Natural killer cell (primary cell): ENCODE measurements at regions of chr1 and their contacts with region 1.

Region 1: DNA sequence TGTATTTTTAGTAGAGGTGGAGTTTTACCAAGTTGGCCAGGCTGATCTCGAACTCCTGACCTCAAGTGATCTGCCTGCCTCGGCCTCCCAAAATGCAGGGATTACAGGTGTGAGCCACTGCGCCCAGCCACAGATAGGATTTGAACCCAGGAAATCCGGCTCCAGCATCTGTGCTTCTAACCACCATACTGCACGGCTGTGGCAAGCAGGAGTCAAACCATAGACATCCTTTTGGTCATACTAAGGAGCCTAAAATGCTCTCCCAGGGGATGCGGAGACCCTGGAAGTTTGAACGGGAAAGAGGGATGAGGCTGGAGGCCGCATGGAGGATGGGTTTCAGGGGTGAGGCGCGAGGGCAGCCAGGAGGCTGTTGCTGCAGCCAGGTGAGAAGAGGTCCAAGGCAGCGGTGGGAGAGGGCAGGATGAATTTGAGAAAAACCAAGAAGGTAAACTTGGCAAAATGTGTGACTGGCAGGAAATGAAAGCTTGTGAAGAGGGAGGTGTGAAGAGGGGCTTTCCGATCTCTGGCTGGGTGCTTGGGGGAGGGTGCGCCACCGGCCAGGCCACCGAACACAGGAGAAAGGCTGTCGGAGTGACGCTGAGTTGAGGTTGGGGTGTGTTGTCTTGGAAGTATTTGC is 24.0 kb upstream of the CDK18 start:
- DNase-seq: peak; percentile 70 to 90
- ATAC-seq: peak; percentile 71 to 80 (median 78)
- H3K4me3 ChIP-seq: no peak overlapping the region
- H3K4me3 Mint-ChIP-seq: peak overlapping the region; percentile 85
- H3K27ac ChIP-seq: peak overlapping the region; percentile 81
- H3K27ac Mint-ChIP-seq: peak overlapping the region; percentile 83 to 95
- H3K4me1 ChIP-seq: peaks cover 81% of the 10 kb centered on the region
- H3K4me1 Mint-ChIP-seq: peaks cover 54 to 63% of the 10 kb centered on the region in 2 donors
- H3K27me3 ChIP-seq: no peaks in the 10 kb centered on the region
- H3K27me3 Mint-ChIP-seq: peaks cover 0 to 17% of the 10 kb centered on the region in 2 donors
- CTCF ChIP-seq: no peak

Region 2: GRCh38 chr1:205438213-205439157 is 42.0 kb before region 1 on chr1:
- intact Hi-C with region 1: loop called (anchors 5 kb)
- DNase-seq: no peak
- ATAC-seq: no peak
- H3K4me3 ChIP-seq: no peak overlapping the region
- H3K4me3 Mint-ChIP-seq: peak overlapping the region; percentile 13
- H3K27ac ChIP-seq: no peak overlapping the region
- H3K27ac Mint-ChIP-seq: peak overlapping the region in 1 of 2 donors; percentile 66
- H3K4me1 ChIP-seq: peaks cover 67% of the 10 kb centered on the region
- H3K4me1 Mint-ChIP-seq: peaks cover 32 to 41% of the 10 kb centered on the region in 2 donors
- H3K27me3 ChIP-seq: no peaks in the 10 kb centered on the region
- H3K27me3 Mint-ChIP-seq: peaks cover 11 to 21% of the 10 kb centered on the region in 2 donors
- CTCF ChIP-seq: no peak